Activated T-helper 1 cell treated with anti-CD3 and anti-CD28 coated beads, Interleukin-12 subunit alpha, Interleukin-12 subunit beta, Interleukin-2, Interleukin-4 antibody, amounts not matched to agents 30 ng/mL and 10 ng/mL and 1 ng/mL, durations not matched to agents 14 hours and 24 hours and 36 hours (primary cell): ENCODE measurements at regions of chr12 and their contacts with region 1.

Region 1: GRCh38 chr12:11136075-11136474 is 1.6 kb upstream of the TAS2R30 start:
- DNase-seq: no peak
- H3K4me3 Mint-ChIP-seq: no peak overlapping the region
- H3K27ac Mint-ChIP-seq: peak overlapping the region; percentile 0
- H3K4me1 Mint-ChIP-seq: peaks cover 22% of the 10 kb centered on the region
- H3K27me3 Mint-ChIP-seq: no peaks in the 10 kb centered on the region

Region 2: DNA sequence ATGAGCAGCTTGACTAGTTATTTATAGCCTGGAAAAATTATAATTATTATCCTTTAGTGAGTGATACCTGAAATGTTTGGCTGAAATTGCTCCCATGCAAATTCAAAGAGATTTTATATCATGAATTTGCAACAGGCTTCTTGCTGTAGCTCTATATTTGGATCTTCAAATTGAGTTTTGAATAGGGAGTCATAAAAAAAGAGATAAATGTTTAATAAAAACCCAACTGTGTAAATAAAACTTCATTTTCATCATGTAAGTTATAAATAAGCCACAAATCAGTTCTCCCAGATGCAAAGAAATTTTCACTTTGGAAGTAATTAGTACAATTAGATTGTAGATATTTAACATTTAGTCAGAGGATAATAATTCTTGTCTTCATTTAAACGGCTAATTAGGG is 328.9 kb before region 1 on chr12 and contains the start of gene TAS2R8:
- intact Hi-C with region 1: no loop called
- DNase-seq: no peak
- H3K4me3 Mint-ChIP-seq: no peak within 1 kb of the TSS
- H3K27ac Mint-ChIP-seq: no peak within 1 kb of the TSS
- H3K4me1 Mint-ChIP-seq: no peaks in the 10 kb centered on the region
- H3K27me3 Mint-ChIP-seq: peaks cover 13% of the 10 kb centered on the region
- total RNA-seq, gene TAS2R8: not detected in 2 replicates

Region 3: GRCh38 chr12:11085419-11085818 is 50.7 kb before region 1 on chr12:
- intact Hi-C with region 1: loop called (anchors 2 kb)
- DNase-seq: no peak
- H3K4me3 Mint-ChIP-seq: no peak overlapping the region
- H3K27ac Mint-ChIP-seq: peak overlapping the region; percentile 34
- H3K4me1 Mint-ChIP-seq: peaks cover 7% of the 10 kb centered on the region
- H3K27me3 Mint-ChIP-seq: no peaks in the 10 kb centered on the region